GM12878 (cell line): ENCODE measurements at regions of chr11 and their contacts with region 1.

Region 1: DNA sequence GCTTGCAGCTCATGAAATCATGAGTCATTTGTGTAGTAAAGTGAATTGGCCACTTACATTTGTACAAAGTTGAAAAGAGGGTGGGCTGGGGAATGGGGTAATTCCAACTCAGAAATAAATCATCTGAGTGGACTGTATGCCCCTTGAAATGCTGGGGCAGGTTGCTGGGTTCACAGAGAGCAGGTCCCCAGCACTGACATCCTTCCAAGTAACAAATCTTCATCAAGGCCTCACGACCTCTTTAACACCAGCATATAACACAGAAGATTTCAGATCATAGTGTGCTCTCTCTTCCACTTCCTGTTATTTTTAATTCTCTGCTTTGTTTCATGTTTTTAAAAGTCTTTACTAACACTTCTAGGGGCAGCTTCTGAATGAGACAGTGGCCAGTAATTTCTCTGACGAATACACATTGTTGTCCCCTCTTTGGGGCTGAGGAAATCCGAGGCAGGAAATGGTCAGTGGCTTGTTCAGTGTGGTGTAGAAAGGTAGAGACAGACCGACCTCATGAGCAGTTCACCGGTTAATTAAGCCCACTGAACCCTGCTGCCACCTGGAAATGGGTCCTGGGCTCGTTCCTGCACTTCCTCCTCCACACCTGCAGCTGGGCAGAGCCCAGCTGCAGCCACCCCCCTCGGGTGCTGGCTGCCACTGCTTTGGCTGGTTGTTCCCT is 127.7 kb downstream of the MAML2 start:
- DNase-seq: peak; percentile 72
- ATAC-seq: peak; percentile 91
- H3K4me3 ChIP-seq: peak overlapping the region; percentile 18; the same call in 1 of the 2 replicates
- H3K27ac ChIP-seq: peak overlapping the region; percentile 77
- H3K4me1 ChIP-seq: peaks cover 38% of the 10 kb centered on the region
- H3K27me3 ChIP-seq: no peaks in the 10 kb centered on the region
- CTCF ChIP-seq: no peak
- EP300 ChIP-seq: peak in 1 of 2 experiments; percentile 40; a peak in 1 of 4 replicates
- POLR2A ChIP-seq: no peak
- RAD21 ChIP-seq: no peak

Region 2: GRCh38 chr11:95923728-95924413 is 291.4 kb before region 1 on chr11 and contains the start of gene MTMR2:
- CTCF ChIA-PET with region 1: no interaction called
- POLR2A ChIA-PET with region 1: no interaction called
- RAD21 ChIA-PET with region 1: no interaction called
- SMC1A ChIA-PET with region 1: no interaction called
- in situ Hi-C with region 1: no loop called
- intact Hi-C with region 1: loop called (anchors 10 kb)
- DNase-seq: peak; percentile 16
- ATAC-seq: peak; percentile 99
- H3K4me3 ChIP-seq: peak within 1 kb of the TSS; percentile 94
- H3K27ac ChIP-seq: peak within 1 kb of the TSS; percentile 90
- H3K4me1 ChIP-seq: no peaks in the 10 kb centered on the region
- H3K27me3 ChIP-seq: no peaks in the 10 kb centered on the region
- CTCF ChIP-seq: no peak
- EP300 ChIP-seq: peak in 1 of 2 experiments; percentile 23; a peak in 1 of 4 replicates
- POLR2A ChIP-seq: peak; percentile 100
- RAD21 ChIP-seq: no peak
- polyA plus RNA-seq, gene MTMR2: 7.6 to 9.8 TPM

Region 3: DNA sequence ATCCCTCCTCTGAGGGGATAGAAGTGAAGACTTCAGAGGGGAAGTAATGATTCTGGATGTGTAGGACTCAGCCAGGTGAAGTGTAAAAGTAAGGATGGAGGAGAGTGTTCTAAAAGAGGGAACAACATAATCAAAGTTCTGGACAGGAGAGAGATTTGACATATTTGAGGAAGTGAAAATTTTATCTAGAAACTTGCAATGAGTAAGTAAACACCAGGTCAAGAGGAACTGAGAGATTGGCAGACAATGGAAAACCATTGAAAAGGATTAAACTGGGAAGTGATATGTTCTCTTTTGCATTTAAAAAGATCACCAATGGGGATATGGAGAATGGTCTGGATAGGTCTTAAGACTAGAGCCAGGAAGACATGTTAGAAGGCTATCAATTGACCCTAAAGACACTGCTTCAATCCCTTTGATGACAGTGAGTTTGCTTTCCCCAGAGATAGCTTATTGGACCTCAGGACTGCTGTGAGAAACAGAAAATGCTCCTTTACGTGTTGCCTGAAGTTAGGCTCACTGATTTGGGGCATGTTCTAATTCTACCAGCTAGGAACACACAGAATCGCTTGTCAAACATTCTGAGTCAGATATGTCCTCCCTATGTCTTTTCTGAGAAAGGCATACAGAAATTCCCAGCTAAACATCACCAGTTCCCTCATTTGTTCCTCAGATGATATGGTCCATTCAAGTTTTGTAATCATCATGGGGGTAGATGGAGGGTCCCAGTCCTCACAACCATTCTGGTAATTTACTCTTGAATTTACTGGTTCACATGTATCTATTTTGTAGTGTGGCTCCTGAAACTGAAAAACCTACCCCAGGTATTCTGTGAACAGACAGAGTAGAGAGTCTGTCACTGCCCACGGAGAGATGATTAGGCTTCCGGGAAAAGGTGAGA is 17.2 kb before region 1 on chr11:
- CTCF ChIA-PET with region 1: no interaction called
- POLR2A ChIA-PET with region 1: interaction called, 4 read pairs
- RAD21 ChIA-PET with region 1: interaction called, 5 read pairs
- SMC1A ChIA-PET with region 1: interaction called, 18 read pairs
- in situ Hi-C with region 1: no loop called
- intact Hi-C with region 1: no loop called
- DNase-seq: no peak
- ATAC-seq: peak; percentile 83
- H3K4me3 ChIP-seq: 0 out of 2 replicates have a peak overlapping the region, but pooled peaks have one; percentile 3
- H3K27ac ChIP-seq: peak overlapping the region; percentile 98
- H3K4me1 ChIP-seq: peaks cover 41% of the 10 kb centered on the region
- H3K27me3 ChIP-seq: no peaks in the 10 kb centered on the region
- CTCF ChIP-seq: no peak
- EP300 ChIP-seq: peak; percentile 82 to 97
- POLR2A ChIP-seq: no peak
- RAD21 ChIP-seq: no peak; the same call in 1 of the 2 replicates

Region 4: GRCh38 chr11:96228473-96228891 is 13.2 kb after region 1 on chr11:
- CTCF ChIA-PET with region 1: interaction called, 6 read pairs
- POLR2A ChIA-PET with region 1: interaction called, 3 read pairs
- RAD21 ChIA-PET with region 1: interaction called, 3 read pairs
- SMC1A ChIA-PET with region 1: interaction called, 10 read pairs
- in situ Hi-C with region 1: no loop called
- intact Hi-C with region 1: no loop called
- DNase-seq: no peak
- ATAC-seq: no peak
- H3K4me3 ChIP-seq: no peak overlapping the region
- H3K27ac ChIP-seq: no peak overlapping the region
- H3K4me1 ChIP-seq: peaks cover 7% of the 10 kb centered on the region; the same call in 1 of the 2 replicates
- H3K27me3 ChIP-seq: no peaks in the 10 kb centered on the region
- CTCF ChIP-seq: no peak
- EP300 ChIP-seq: no peak
- POLR2A ChIP-seq: no peak
- RAD21 ChIP-seq: no peak

Region 5: GRCh38 chr11:96412761-96413381 is 197.6 kb after region 1 on chr11:
- CTCF ChIA-PET with region 1: no interaction called
- POLR2A ChIA-PET with region 1: no interaction called
- RAD21 ChIA-PET with region 1: no interaction called
- SMC1A ChIA-PET with region 1: no interaction called
- in situ Hi-C with region 1: no loop called
- intact Hi-C with region 1: no loop called
- DNase-seq: no peak
- ATAC-seq: peak; percentile 78
- H3K4me3 ChIP-seq: no peak overlapping the region
- H3K27ac ChIP-seq: no peak overlapping the region
- H3K4me1 ChIP-seq: no peaks in the 10 kb centered on the region
- H3K27me3 ChIP-seq: no peaks in the 10 kb centered on the region
- CTCF ChIP-seq: no peak
- EP300 ChIP-seq: no peak
- POLR2A ChIP-seq: no peak
- RAD21 ChIP-seq: no peak